OCI-LY7 (cell line): ENCODE measurements at regions of chr11 and their contacts with region 1.

Region 1: GRCh38 chr11:128725630-128726319 is 31.9 kb downstream of the FLI1 start:
- DNase-seq: peak; percentile 95
- H3K4me3 ChIP-seq: peak overlapping the region; percentile 57
- H3K27ac ChIP-seq: peak overlapping the region; percentile 99
- H3K4me1 ChIP-seq: peaks cover 99% of the 10 kb centered on the region
- CTCF ChIP-seq: no peak

Region 2: GRCh38 chr11:128522055-128522942 is 203.5 kb before region 1 on chr11:
- CTCF ChIA-PET with region 1: interaction called, 3 read pairs
- POLR2A ChIA-PET with region 1: interaction called, 20 read pairs
- intact Hi-C with region 1: loop called (anchors 5 kb)
- DNase-seq: peak; percentile 93
- H3K4me3 ChIP-seq: peak overlapping the region; percentile 98
- H3K27ac ChIP-seq: peak overlapping the region; percentile 79
- H3K4me1 ChIP-seq: peaks cover 44% of the 10 kb centered on the region
- CTCF ChIP-seq: no peak

Region 3: GRCh38 chr11:128610721-128611617 is 114.8 kb before region 1 on chr11:
- CTCF ChIA-PET with region 1: interaction called, 3 read pairs
- POLR2A ChIA-PET with region 1: interaction called, 19 read pairs
- intact Hi-C with region 1: loop called (anchors 2 kb)
- DNase-seq: peak; percentile 98
- H3K4me3 ChIP-seq: peak overlapping the region; percentile 45
- H3K27ac ChIP-seq: peak overlapping the region; percentile 99
- H3K4me1 ChIP-seq: peaks cover 93% of the 10 kb centered on the region
- CTCF ChIP-seq: no peak

Region 4: GRCh38 chr11:128714881-128715280 is 10.9 kb before region 1 on chr11:
- CTCF ChIA-PET with region 1: interaction called, 21 read pairs
- POLR2A ChIA-PET with region 1: interaction called, 66 read pairs
- intact Hi-C with region 1: no loop called
- DNase-seq: no peak
- H3K4me3 ChIP-seq: no peak overlapping the region
- H3K27ac ChIP-seq: no peak overlapping the region
- H3K4me1 ChIP-seq: peaks cover 71% of the 10 kb centered on the region
- CTCF ChIP-seq: no peak

Region 5: DNA sequence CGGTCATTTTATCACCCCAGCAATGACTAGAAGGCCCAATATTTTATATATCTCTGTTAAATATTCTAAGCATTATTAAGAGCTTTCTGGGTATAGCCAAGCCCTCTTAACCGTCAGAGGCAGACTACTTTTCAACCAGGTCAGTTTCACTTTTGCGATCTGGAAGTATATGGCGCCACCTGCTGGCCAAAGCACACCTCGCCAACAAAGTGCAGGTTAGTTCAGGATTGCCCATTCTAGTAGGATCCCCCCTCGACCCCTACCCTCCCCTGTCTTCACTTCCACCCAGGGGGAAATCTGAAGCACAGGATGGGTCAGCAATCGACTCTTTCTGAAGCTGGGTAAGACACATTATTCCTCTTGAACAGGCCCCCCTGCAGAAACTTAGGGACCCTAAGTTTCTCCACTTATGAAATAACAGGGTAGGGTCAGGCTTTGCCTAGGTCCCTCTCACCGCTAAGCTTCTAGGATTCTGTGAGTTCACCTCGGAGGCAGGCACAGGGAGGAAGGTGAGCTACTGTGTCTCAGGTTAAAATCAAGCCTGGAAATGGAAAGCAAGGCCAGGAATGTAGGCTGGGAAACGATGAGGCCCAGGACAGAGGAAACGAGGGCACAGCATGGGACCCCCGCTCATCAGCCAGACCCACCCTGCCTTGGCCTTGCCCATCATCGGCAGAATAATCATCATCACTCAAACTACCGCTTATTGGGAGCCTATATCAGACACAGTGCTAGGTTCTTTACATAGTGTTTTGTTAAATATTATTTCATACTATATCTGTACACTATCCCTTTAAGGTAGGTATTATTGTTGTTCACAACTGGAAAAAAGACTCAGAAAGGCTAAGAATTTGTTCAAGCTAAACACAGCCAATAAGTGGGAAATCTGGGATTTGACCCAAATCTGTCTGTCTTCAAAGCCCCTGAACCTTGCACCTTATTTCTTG is 105.7 kb after region 1 on chr11:
- CTCF ChIA-PET with region 1: interaction called, 3 read pairs
- POLR2A ChIA-PET with region 1: interaction called, 4 read pairs
- intact Hi-C with region 1: loop called (anchors 2 kb)
- DNase-seq: peak; percentile 91
- H3K4me3 ChIP-seq: peak overlapping the region; percentile 37
- H3K27ac ChIP-seq: peak overlapping the region; percentile 71
- H3K4me1 ChIP-seq: peaks cover 60% of the 10 kb centered on the region
- CTCF ChIP-seq: peak; percentile 99

Region 6: DNA sequence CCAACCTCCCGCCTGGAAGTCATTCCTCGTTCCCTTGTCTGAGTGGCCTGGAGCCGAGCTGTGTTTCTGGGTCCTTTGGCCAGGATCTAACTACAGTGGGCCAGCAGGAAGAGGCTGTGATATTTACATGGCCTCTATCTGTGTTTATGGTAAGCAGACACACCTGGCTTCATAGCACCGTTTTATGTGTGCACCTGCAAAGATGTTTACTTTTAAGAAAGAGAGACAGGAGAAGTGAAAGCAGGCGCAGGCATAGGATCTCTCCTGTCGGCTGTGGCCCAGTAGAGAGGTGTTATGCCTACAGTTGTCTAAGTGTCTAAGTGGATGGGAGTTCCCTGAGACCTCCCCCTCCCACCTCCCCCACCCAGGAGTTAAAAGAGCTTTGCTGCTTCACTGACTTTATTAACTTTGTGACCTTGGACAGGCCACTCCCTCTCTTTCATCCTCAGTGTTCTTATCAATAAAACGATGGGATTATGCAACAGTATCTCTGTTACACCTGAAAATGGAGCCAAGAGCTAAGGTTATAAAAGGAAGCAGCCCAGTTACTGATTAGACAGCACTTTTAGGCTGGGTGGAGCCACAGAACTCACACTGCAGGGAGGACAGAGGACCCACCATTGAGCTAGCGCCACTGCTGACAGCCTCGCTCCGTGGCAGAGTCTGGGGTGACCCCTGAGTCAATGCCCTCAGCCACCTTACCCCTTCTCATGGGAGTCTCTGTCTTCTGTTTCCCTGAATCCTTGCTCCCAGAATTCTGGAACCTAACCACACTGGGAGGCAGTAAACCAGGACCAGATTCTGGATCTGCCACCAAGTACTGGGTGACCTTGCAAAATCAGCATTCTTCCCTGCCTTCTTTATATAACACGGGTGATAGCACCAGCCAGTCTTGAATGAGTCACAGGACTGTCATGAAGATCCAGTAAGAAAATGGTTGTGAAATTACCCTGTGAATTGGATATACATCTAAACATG is 1455.8 kb after region 1 on chr11:
- CTCF ChIA-PET with region 1: no interaction called
- POLR2A ChIA-PET with region 1: no interaction called
- intact Hi-C with region 1: loop called (anchors 5 kb)
- DNase-seq: peak; percentile 98
- H3K4me3 ChIP-seq: peak overlapping the region; percentile 64
- H3K27ac ChIP-seq: peak overlapping the region; percentile 99
- H3K4me1 ChIP-seq: peaks cover 96% of the 10 kb centered on the region
- CTCF ChIP-seq: peak; percentile 35; the same call in 1 of the 2 replicates